ENCODE measurements at regions of chr10 and their contacts with region 1.

Region 1: GRCh38 chr10:79068562-79069324 is at the start of gene ZMIZ1:
- DNase-seq: peak; percentile 100
- ATAC-seq: peak; percentile 47
- H3K4me3 ChIP-seq: peak within 1 kb of the TSS; percentile 66
- H3K27ac ChIP-seq: peak within 1 kb of the TSS; percentile 3
- H3K4me1 ChIP-seq: peaks cover 34% of the 10 kb centered on the region
- H3K27me3 ChIP-seq: no peaks in the 10 kb centered on the region
- CTCF ChIP-seq: peak; percentile 57
- total RNA-seq, gene ZMIZ1: 55.4 and 84.2 TPM in 2 replicates

Region 2: GRCh38 chr10:78029269-78030226 is 1039.2 kb before region 1 on chr10 and contains the start of gene POLR3A:
- CTCF ChIA-PET with region 1: no interaction called
- POLR2A ChIA-PET with region 1: no interaction called
- intact Hi-C with region 1: loop called (anchors 2 kb)
- DNase-seq: peak; percentile 100
- ATAC-seq: peak; percentile 48
- H3K4me3 ChIP-seq: peak within 1 kb of the TSS; percentile 69
- H3K27ac ChIP-seq: peak within 1 kb of the TSS; percentile 23
- H3K4me1 ChIP-seq: peaks cover 47% of the 10 kb centered on the region
- H3K27me3 ChIP-seq: no peaks in the 10 kb centered on the region
- CTCF ChIP-seq: peak; percentile 100
- total RNA-seq, gene POLR3A: 97.0 and 97.2 TPM in 2 replicates

Region 3: DNA sequence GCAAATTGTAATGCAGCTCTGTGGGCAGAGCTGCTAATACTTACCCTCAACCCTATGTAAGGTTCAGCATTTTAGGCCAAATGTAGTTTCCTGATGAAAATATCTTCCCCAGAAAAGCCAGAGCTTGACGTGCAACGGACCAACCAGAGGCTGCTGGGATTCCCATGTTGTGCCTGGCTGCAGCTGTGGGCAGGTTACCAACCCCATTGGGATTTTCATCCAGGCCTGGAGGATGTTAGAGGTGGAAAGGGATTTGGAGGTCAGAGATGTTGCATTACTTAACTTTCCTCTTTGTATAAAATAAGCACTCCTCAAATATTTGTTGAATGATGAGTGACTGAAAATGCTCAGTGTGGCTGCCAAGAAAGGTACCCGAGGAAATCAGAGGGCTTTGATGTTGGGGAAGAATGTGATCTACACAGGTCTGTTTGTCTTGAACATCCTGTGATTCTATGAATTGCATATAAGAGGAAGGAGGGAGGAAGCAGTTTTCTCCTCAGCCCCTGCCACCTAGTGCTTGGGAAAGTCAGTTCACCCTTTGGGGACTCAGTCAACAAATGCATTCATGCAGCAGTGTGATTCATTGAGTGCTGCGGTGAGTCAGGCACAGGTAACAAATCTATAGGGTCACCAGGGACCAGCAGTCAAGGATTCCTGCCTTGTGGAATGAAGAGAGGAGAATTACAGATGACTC is 547.9 kb before region 1 on chr10:
- CTCF ChIA-PET with region 1: no interaction called
- POLR2A ChIA-PET with region 1: no interaction called
- intact Hi-C with region 1: loop called (anchors 10 kb)
- DNase-seq: peak; percentile 100
- ATAC-seq: peak; percentile 100
- H3K4me3 ChIP-seq: no peak overlapping the region
- H3K27ac ChIP-seq: peak overlapping the region; percentile 42
- H3K4me1 ChIP-seq: peaks cover 31% of the 10 kb centered on the region
- H3K27me3 ChIP-seq: no peaks in the 10 kb centered on the region
- CTCF ChIP-seq: peak; percentile 99

Region 4: GRCh38 chr10:78805176-78805575 is 263.6 kb before region 1 on chr10:
- CTCF ChIA-PET with region 1: no interaction called
- POLR2A ChIA-PET with region 1: interaction called, 3 read pairs
- intact Hi-C with region 1: loop called (anchors 1 kb)
- DNase-seq: peak; percentile 100
- ATAC-seq: peak; percentile 90
- H3K4me3 ChIP-seq: no peak overlapping the region
- H3K27ac ChIP-seq: peak overlapping the region; percentile 40
- H3K4me1 ChIP-seq: peaks cover 59% of the 10 kb centered on the region
- H3K27me3 ChIP-seq: no peaks in the 10 kb centered on the region
- CTCF ChIP-seq: no peak

Region 5: DNA sequence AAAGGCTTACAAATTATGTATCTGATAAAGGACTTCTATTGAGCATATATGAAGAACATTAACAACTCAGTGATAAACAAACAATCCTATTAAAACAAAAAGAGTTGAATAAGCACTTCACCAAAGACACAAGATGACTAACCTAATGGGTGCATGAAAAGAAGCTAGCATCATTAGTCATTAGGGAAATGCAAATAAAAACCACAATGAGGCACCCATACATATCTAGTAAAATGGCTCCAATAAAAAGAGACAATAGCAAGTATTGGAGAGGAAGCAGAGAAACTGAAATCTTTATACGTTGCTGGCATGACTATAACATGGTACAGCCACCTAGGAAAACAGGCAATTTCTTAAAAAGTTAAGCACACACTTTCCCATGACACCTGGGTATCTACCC is 77.6 kb before region 1 on chr10:
- CTCF ChIA-PET with region 1: interaction called, 5 read pairs
- POLR2A ChIA-PET with region 1: no interaction called
- intact Hi-C with region 1: loop called (anchors 1 kb)
- DNase-seq: peak; percentile 100
- ATAC-seq: peak; percentile 97
- H3K4me3 ChIP-seq: 0 out of 2 replicates have a peak overlapping the region, but pooled peaks have one; percentile 0
- H3K27ac ChIP-seq: peak overlapping the region; percentile 36
- H3K4me1 ChIP-seq: peaks cover 19% of the 10 kb centered on the region
- H3K27me3 ChIP-seq: no peaks in the 10 kb centered on the region
- CTCF ChIP-seq: no peak; the same call in 1 of the 2 replicates

Region 6: GRCh38 chr10:79093658-79094411 is 25.1 kb after region 1 on chr10:
- CTCF ChIA-PET with region 1: no interaction called
- POLR2A ChIA-PET with region 1: no interaction called
- intact Hi-C with region 1: no loop called
- DNase-seq: peak; percentile 90
- ATAC-seq: peak; percentile 49
- H3K4me3 ChIP-seq: no peak overlapping the region
- H3K27ac ChIP-seq: peak overlapping the region; percentile 21
- H3K4me1 ChIP-seq: peaks cover 20% of the 10 kb centered on the region
- H3K27me3 ChIP-seq: no peaks in the 10 kb centered on the region
- CTCF ChIP-seq: no peak

Region 7: GRCh38 chr10:79155301-79156081 is 86.7 kb after region 1 on chr10:
- CTCF ChIA-PET with region 1: interaction called, 6 read pairs
- POLR2A ChIA-PET with region 1: interaction called, 3 read pairs
- intact Hi-C with region 1: loop called (anchors 1 kb)
- DNase-seq: peak; percentile 93
- ATAC-seq: no peak
- H3K4me3 ChIP-seq: no peak overlapping the region
- H3K27ac ChIP-seq: peak overlapping the region; percentile 47
- H3K4me1 ChIP-seq: peaks cover 82% of the 10 kb centered on the region
- H3K27me3 ChIP-seq: no peaks in the 10 kb centered on the region
- CTCF ChIP-seq: no peak

Region 8: GRCh38 chr10:80078448-80079311 is 1009.9 kb after region 1 on chr10 and contains the start of gene TMEM254:
- CTCF ChIA-PET with region 1: no interaction called
- POLR2A ChIA-PET with region 1: no interaction called
- intact Hi-C with region 1: loop called (anchors 5 kb)
- DNase-seq: peak; percentile 100
- ATAC-seq: peak; percentile 85
- H3K4me3 ChIP-seq: peak within 1 kb of the TSS; percentile 67
- H3K27ac ChIP-seq: peak within 1 kb of the TSS; percentile 72
- H3K4me1 ChIP-seq: peaks cover 39% of the 10 kb centered on the region
- H3K27me3 ChIP-seq: no peaks in the 10 kb centered on the region
- CTCF ChIP-seq: no peak
- total RNA-seq, gene TMEM254: 53.7 and 68.3 TPM in 2 replicates